Activated B cell treated with CpG ODN at 0.5 μM for 24 hours (primary cell): ENCODE measurements at regions of chr7 and their contacts with region 1.

Region 1: DNA sequence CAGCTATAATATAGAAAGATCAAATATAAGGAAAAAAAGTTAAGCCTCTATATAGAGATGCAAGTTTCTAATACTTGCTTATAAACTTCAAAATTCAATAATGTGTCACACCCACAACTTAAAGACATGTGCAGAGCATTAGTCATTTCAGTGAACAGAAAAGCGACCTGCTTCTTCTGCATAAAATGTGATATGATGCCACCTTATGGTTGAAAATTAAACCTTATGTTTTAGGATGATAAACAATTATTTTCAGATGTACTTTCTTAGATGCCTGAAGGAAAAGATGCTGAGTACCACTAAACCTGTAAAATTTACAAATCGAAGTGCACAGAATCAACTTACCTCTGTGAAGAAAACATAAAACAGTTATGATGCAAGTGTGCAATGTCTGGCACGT is 96.0 kb downstream of the MTERF1 start:
- DNase-seq: no peak
- ATAC-seq: no peak
- H3K4me3 Mint-ChIP-seq: no peak overlapping the region
- H3K27ac Mint-ChIP-seq: no peak overlapping the region
- H3K4me1 Mint-ChIP-seq: no peaks in the 10 kb centered on the region
- H3K27me3 Mint-ChIP-seq: no peaks in the 10 kb centered on the region
- CTCF ChIP-seq: no peak

Region 2: DNA sequence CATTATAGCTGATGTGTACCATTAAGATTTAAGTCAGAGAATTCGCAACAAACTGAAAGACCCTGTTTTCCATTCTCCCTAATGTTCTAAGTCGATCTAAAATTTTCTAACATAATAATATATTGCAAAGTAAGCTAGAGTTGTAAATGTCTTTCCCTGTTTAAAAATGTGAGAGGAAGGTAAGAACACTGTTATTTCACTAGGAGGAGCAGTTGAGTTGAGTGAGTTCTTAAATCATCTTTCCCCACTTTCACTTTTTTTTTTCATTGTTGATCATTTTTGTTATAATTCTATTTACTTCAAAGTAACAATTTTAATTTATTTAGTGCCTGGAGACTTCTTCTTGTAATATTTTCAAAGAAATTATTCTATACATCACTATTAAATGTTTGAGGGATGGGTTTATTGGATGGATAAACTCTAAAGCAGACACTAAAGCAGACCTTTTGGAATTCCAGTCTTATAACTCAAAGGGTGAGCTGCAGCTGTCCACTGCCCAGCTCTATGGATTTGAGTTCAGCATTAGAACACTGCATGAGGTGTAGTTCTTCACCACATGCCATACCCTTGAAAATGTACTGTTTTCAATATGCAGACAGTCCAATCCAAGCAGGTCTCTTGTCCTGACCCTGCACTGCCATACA is 701.5 kb before region 1 on chr7:
- CTCF ChIA-PET with region 1: no interaction called
- POLR2A ChIA-PET with region 1: no interaction called
- intact Hi-C with region 1: loop called (anchors 1 kb)
- DNase-seq: no peak
- ATAC-seq: no peak
- H3K4me3 Mint-ChIP-seq: no peak overlapping the region
- H3K27ac Mint-ChIP-seq: peak overlapping the region; percentile 46
- H3K4me1 Mint-ChIP-seq: peaks cover 16% of the 10 kb centered on the region
- H3K27me3 Mint-ChIP-seq: no peaks in the 10 kb centered on the region
- CTCF ChIP-seq: no peak

Region 3: DNA sequence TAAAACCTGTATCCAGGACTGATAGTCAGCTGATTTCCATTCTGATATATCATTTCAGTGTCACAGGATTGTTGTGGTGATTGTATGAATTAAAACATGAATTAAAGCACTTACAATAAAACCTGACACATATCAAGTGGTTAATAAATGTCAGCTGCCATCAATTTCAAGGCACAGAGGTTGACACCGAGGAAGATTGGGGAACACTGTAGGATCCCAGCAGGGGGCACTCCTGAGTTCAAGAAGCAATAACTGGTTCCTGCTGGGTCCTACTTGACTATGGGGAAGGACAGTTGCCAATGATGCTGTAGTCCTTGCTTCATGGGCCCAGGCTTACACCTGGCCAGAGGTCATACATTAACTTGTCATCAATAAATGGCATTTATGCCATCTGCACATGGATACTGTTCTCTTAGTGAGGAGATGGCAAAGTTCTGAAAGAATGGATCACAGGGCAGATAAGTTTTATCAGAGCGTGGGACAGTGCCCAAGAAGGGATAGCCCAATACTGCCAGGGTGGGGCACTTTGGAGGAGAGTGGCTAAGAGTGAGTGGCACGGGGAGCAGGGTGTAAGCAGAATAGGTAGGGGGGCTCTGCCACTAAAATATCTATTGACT is 496.1 kb before region 1 on chr7:
- CTCF ChIA-PET with region 1: no interaction called
- POLR2A ChIA-PET with region 1: no interaction called
- intact Hi-C with region 1: loop called (anchors 2 kb)
- DNase-seq: no peak
- ATAC-seq: no peak
- H3K4me3 Mint-ChIP-seq: no peak overlapping the region
- H3K27ac Mint-ChIP-seq: no peak overlapping the region
- H3K4me1 Mint-ChIP-seq: no peaks in the 10 kb centered on the region
- H3K27me3 Mint-ChIP-seq: peaks cover 15% of the 10 kb centered on the region
- CTCF ChIP-seq: no peak

Region 4: GRCh38 chr7:91759215-91759871 is 25.1 kb before region 1 on chr7:
- CTCF ChIA-PET with region 1: no interaction called
- POLR2A ChIA-PET with region 1: no interaction called
- intact Hi-C with region 1: no loop called
- DNase-seq: no peak
- ATAC-seq: no peak
- H3K4me3 Mint-ChIP-seq: no peak overlapping the region
- H3K27ac Mint-ChIP-seq: no peak overlapping the region
- H3K4me1 Mint-ChIP-seq: no peaks in the 10 kb centered on the region
- H3K27me3 Mint-ChIP-seq: peaks cover 2% of the 10 kb centered on the region
- CTCF ChIP-seq: no peak